IMR-90 (cell line): ENCODE measurements at regions of chr6 and their contacts with region 1.

Region 1: GRCh38 chr6:90216072-90216977 is 80.3 kb downstream of the BACH2 start:
- DNase-seq: peak; percentile 35
- ATAC-seq: no peak
- H3K4me3 ChIP-seq: no peak overlapping the region
- H3K27ac ChIP-seq: no peak overlapping the region
- H3K4me1 ChIP-seq: peaks cover 19% of the 10 kb centered on the region
- H3K27me3 ChIP-seq: no peaks in the 10 kb centered on the region
- CTCF ChIP-seq: no peak
- POLR2A ChIP-seq: no peak
- RAD21 ChIP-seq: no peak

Region 2: DNA sequence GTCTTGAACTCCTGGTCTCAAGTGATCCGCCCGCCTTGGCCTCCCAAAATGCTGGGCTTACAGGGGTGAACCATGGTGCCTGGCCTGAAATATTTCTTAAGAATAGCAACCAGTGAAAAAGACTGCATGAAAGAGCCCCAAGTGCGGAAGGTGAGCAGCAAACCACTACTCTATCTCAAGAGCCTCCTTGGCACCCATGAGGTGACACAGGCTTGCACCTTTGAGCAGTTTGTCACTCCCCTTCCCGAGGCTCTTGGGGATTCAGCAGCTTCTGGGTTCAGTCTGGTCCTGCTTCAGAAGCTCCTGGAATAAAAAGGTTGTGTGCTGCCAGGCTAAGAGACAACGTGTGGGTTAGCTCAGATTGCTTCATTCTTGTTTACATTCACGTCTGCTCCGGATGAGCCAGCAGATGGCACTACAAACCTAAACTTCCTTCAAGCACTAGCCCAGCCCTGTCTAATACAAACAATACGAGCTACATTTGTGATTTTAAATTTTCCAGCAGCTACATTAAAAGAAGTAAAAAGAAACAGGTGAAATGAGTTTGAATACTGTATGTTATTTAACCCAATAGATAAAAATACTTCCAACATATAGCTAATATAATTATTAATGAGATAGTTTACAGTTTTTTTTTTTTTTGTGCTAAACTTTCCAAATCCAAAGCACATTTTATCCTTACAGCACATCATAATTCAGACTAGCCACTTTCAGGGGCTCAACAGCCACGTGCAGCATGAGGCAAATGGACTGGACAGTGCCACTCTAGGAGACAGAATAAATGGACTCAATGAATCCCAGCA is 275.9 kb before region 1 on chr6:
- CTCF ChIA-PET with region 1: no interaction called
- POLR2A ChIA-PET with region 1: no interaction called
- dilution Hi-C with region 1: no loop called
- in situ Hi-C with region 1: no loop called
- intact Hi-C with region 1: loop called (anchors 1 kb)
- DNase-seq: peak; percentile 86
- ATAC-seq: peak; percentile 99
- H3K4me3 ChIP-seq: no peak overlapping the region
- H3K27ac ChIP-seq: no peak overlapping the region
- H3K4me1 ChIP-seq: no peaks in the 10 kb centered on the region; the same call in 1 of the 2 replicates
- H3K27me3 ChIP-seq: no peaks in the 10 kb centered on the region
- CTCF ChIP-seq: peak; percentile 92
- POLR2A ChIP-seq: no peak
- RAD21 ChIP-seq: peak; percentile 97

Region 3: GRCh38 chr6:90098001-90098531 is 118.3 kb before region 1 on chr6:
- CTCF ChIA-PET with region 1: no interaction called
- POLR2A ChIA-PET with region 1: no interaction called
- dilution Hi-C with region 1: no loop called
- in situ Hi-C with region 1: no loop called
- intact Hi-C with region 1: loop called (anchors 5 kb)
- DNase-seq: peak; percentile 89
- ATAC-seq: peak; percentile 86
- H3K4me3 ChIP-seq: no peak overlapping the region
- H3K27ac ChIP-seq: peak overlapping the region; percentile 9; the same call in 1 of the 2 replicates
- H3K4me1 ChIP-seq: peaks cover 12% of the 10 kb centered on the region
- H3K27me3 ChIP-seq: no peaks in the 10 kb centered on the region
- CTCF ChIP-seq: peak; percentile 59
- POLR2A ChIP-seq: no peak
- RAD21 ChIP-seq: peak; percentile 58

Region 4: DNA sequence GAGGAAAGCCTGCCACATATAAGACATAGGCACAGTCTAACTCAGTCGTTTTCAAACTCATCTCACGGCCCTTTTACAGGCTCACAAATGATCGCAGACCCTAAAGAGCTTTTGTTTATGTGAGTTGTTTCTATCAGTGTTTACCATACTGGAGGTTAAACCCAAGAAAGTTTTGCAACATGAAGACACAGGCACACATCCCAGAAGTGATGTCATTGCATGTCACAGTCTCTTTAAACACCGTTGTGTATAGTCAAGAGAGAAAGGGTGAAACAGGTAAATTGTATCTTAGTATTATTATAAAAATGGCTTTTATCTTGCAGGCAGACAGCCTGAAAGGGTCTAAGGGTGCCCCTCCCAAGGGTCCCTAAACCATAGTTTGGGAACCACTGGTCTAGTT is 16.4 kb before region 1 on chr6:
- CTCF ChIA-PET with region 1: no interaction called
- POLR2A ChIA-PET with region 1: no interaction called
- dilution Hi-C with region 1: no loop called
- in situ Hi-C with region 1: no loop called
- intact Hi-C with region 1: loop called (anchors 2 kb)
- DNase-seq: peak; percentile 79
- ATAC-seq: peak; percentile 59
- H3K4me3 ChIP-seq: no peak overlapping the region
- H3K27ac ChIP-seq: peak overlapping the region; percentile 38; the same call in 1 of the 2 replicates
- H3K4me1 ChIP-seq: peaks cover 12% of the 10 kb centered on the region
- H3K27me3 ChIP-seq: no peaks in the 10 kb centered on the region
- CTCF ChIP-seq: no peak
- POLR2A ChIP-seq: no peak
- RAD21 ChIP-seq: no peak

Region 5: GRCh38 chr6:90369024-90369519 is 152.7 kb after region 1 on chr6:
- CTCF ChIA-PET with region 1: no interaction called
- POLR2A ChIA-PET with region 1: no interaction called
- dilution Hi-C with region 1: no loop called
- in situ Hi-C with region 1: no loop called
- intact Hi-C with region 1: loop called (anchors 1 kb)
- DNase-seq: peak; percentile 100
- ATAC-seq: peak; percentile 97
- H3K4me3 ChIP-seq: no peak overlapping the region
- H3K27ac ChIP-seq: no peak overlapping the region
- H3K4me1 ChIP-seq: peaks cover 3% of the 10 kb centered on the region
- H3K27me3 ChIP-seq: no peaks in the 10 kb centered on the region
- CTCF ChIP-seq: no peak
- POLR2A ChIP-seq: no peak
- RAD21 ChIP-seq: no peak